B cell (primary cell): ENCODE measurements at regions of chr1 and their contacts with region 1.

Region 1: GRCh38 chr1:175023043-175023921 is at the start of gene MRPS14:
- DNase-seq: peak; percentile 99
- ATAC-seq: peak; percentile 95
- H3K4me3 ChIP-seq: peak within 1 kb of the TSS; percentile 91 to 99 (median 95)
- H3K4me3 Mint-ChIP-seq: peak within 1 kb of the TSS; percentile 95
- H3K27ac ChIP-seq: peak within 1 kb of the TSS; percentile 84 to 87
- H3K27ac Mint-ChIP-seq: peak within 1 kb of the TSS; percentile 92
- H3K4me1 ChIP-seq: peaks cover 10 to 15% of the 10 kb centered on the region in 2 donors
- H3K4me1 Mint-ChIP-seq: peaks cover 28% of the 10 kb centered on the region
- H3K27me3 ChIP-seq: no peaks in the 10 kb centered on the region
- H3K27me3 Mint-ChIP-seq: no peaks in the 10 kb centered on the region
- CTCF ChIP-seq: no peak
- total RNA-seq, gene MRPS14: 26.5 and 29.4 TPM in 2 replicates

Region 2: DNA sequence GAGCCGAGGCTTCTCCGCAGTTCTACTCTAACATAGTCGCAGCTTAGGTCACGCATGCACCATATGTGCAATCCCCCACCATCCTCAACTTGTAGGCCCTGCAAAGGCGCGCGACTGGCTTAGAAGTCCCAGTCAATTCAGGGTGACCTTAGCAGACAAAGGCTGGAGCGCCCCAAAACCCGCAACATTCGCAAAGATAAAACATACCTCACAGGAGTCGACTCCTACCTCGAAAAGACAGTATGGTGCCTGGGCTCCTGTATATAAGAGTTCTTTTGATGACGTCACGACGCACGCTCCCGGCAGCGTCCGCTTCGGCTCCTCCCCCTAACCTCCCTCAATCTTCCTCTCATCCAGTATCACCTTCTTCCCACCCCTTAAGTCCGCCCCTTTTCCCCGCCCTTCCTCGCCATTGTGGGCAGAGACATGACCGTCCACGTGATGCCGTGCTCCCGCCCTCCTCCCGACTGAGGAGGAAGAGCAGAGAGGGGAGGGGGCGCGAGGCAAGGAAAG is 1155.5 kb before region 1 on chr1 and contains the start of gene GAS5:
- CTCF ChIA-PET with region 1: no interaction called
- POLR2A ChIA-PET with region 1: no interaction called
- intact Hi-C with region 1: loop called (anchors 1 kb)
- DNase-seq: peak; percentile 99
- ATAC-seq: peak; percentile 77
- H3K4me3 ChIP-seq: peak within 1 kb of the TSS; percentile 70 to 98 (median 89)
- H3K4me3 Mint-ChIP-seq: peak within 1 kb of the TSS; percentile 94
- H3K27ac ChIP-seq: peak within 1 kb of the TSS; percentile 90 to 93
- H3K27ac Mint-ChIP-seq: peak within 1 kb of the TSS; percentile 98
- H3K4me1 ChIP-seq: peaks cover 42 to 50% of the 10 kb centered on the region in 2 donors
- H3K4me1 Mint-ChIP-seq: peaks cover 70% of the 10 kb centered on the region
- H3K27me3 ChIP-seq: no peaks in the 10 kb centered on the region
- H3K27me3 Mint-ChIP-seq: no peaks in the 10 kb centered on the region
- CTCF ChIP-seq: no peak
- total RNA-seq, gene GAS5: 590 and 622 TPM in 2 replicates

Region 3: DNA sequence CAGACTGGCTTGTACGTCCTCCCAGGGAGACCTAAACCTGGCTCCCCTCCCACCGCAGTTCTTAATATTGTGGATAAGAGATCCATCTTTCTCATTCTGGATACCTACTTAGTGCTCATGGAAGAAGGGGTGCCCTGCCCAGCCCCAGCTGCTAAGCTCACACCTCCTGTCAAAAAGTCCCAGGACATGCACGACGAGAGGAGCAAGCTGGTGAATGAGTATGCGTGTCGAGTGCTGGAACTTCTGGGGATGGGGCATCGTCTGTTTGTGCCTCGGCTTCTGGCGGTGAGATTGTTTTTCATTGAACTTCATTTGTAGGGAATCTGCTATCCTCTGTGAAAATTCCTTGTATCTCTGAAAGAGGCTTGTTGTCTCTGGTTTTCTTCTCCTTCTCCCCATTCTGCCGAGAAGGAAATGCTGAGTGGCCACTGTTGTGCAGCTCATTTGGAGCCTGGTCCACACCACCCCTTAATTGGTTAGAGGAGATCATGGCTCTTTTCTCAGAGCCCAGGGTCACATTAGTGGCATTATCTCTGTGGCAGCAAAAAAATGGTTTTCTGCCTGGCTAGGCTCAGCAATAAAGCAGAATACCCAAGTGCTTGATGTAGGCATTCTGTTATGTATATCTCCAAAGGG is 222.9 kb before region 1 on chr1:
- CTCF ChIA-PET with region 1: no interaction called
- POLR2A ChIA-PET with region 1: interaction called, 3 read pairs
- intact Hi-C with region 1: loop called (anchors 1 kb)
- DNase-seq: no peak
- ATAC-seq: no peak
- H3K4me3 ChIP-seq: peak overlapping the region; percentile 65 to 97 (median 68)
- H3K4me3 Mint-ChIP-seq: no peak overlapping the region
- H3K27ac ChIP-seq: peak overlapping the region; percentile 78 to 88
- H3K27ac Mint-ChIP-seq: no peak overlapping the region
- H3K4me1 ChIP-seq: peaks cover 14 to 17% of the 10 kb centered on the region in 2 donors
- H3K4me1 Mint-ChIP-seq: peaks cover 14% of the 10 kb centered on the region
- H3K27me3 ChIP-seq: no peaks in the 10 kb centered on the region
- H3K27me3 Mint-ChIP-seq: no peaks in the 10 kb centered on the region
- CTCF ChIP-seq: no peak

Region 4: GRCh38 chr1:175174309-175175165 is 151.3 kb after region 1 on chr1:
- CTCF ChIA-PET with region 1: no interaction called
- POLR2A ChIA-PET with region 1: no interaction called
- intact Hi-C with region 1: no loop called
- DNase-seq: no peak
- ATAC-seq: no peak
- H3K4me3 ChIP-seq: no peak overlapping the region
- H3K4me3 Mint-ChIP-seq: no peak overlapping the region
- H3K27ac ChIP-seq: peak overlapping the region; percentile 7 to 58
- H3K27ac Mint-ChIP-seq: peak overlapping the region; percentile 51
- H3K4me1 ChIP-seq: peaks cover 50 to 54% of the 10 kb centered on the region in 2 donors
- H3K4me1 Mint-ChIP-seq: peaks cover 88% of the 10 kb centered on the region
- H3K27me3 ChIP-seq: no peaks in the 10 kb centered on the region
- H3K27me3 Mint-ChIP-seq: no peaks in the 10 kb centered on the region
- CTCF ChIP-seq: no peak

Region 5: GRCh38 chr1:175192630-175193526 is 169.6 kb after region 1 on chr1 and contains the start of gene KIAA0040:
- CTCF ChIA-PET with region 1: no interaction called
- POLR2A ChIA-PET with region 1: no interaction called
- intact Hi-C with region 1: loop called (anchors 10 kb)
- DNase-seq: peak; percentile 84
- ATAC-seq: peak; percentile 61
- H3K4me3 ChIP-seq: peak within 1 kb of the TSS; percentile 71 to 99 (median 97)
- H3K4me3 Mint-ChIP-seq: peak within 1 kb of the TSS; percentile 99
- H3K27ac ChIP-seq: peak within 1 kb of the TSS; percentile 69 to 81
- H3K27ac Mint-ChIP-seq: peak within 1 kb of the TSS; percentile 96
- H3K4me1 ChIP-seq: peaks cover 81 to 87% of the 10 kb centered on the region in 2 donors
- H3K4me1 Mint-ChIP-seq: peaks cover 88% of the 10 kb centered on the region
- H3K27me3 ChIP-seq: no peaks in the 10 kb centered on the region
- H3K27me3 Mint-ChIP-seq: no peaks in the 10 kb centered on the region
- CTCF ChIP-seq: no peak
- total RNA-seq, gene KIAA0040: 84.2 and 93.6 TPM in 2 replicates